Naive thymus-derived CD4-positive, alpha-beta T cell (primary cell): ENCODE measurements at regions of chr19 and their contacts with region 1.

Region 1: GRCh38 chr19:40716655-40717324 is at the starts of genes COQ8B and ITPKC:
- DNase-seq: peak; percentile 96 to 100 (median 99)
- ATAC-seq: peak; percentile 88
- H3K4me3 ChIP-seq: peak within 1 kb of the TSS; percentile 75
- H3K4me3 Mint-ChIP-seq: peak within 1 kb of the TSS; percentile 87 to 99 (median 94)
- H3K27ac ChIP-seq: peak within 1 kb of the TSS; percentile 92
- H3K27ac Mint-ChIP-seq: peak within 1 kb of the TSS; percentile 94 to 99 (median 97)
- H3K4me1 ChIP-seq: peaks cover 39 to 44% of the 10 kb centered on the region in 2 donors
- H3K4me1 Mint-ChIP-seq: peaks cover 42 to 74% (median 67%) of the 10 kb centered on the region in 7 donors
- H3K27me3 ChIP-seq: no peaks in the 10 kb centered on the region
- H3K27me3 Mint-ChIP-seq: no peaks in the 10 kb centered on the region
- total RNA-seq, gene COQ8B: 26.2 to 48.3 (median 43.8) TPM
- total RNA-seq, gene ITPKC: 4.9 to 9.0 (median 7.3) TPM

Region 2: GRCh38 chr19:39970675-39971379 is 746.0 kb before region 1 on chr19 and contains the start of gene PSMC4:
- CTCF ChIA-PET with region 1: no interaction called
- POLR2A ChIA-PET with region 1: no interaction called
- intact Hi-C with region 1: loop called in 1 of 2 experiments (anchors 10 kb)
- DNase-seq: peak; percentile 94 to 99 (median 98)
- ATAC-seq: peak; percentile 98
- H3K4me3 ChIP-seq: peak within 1 kb of the TSS; percentile 88
- H3K4me3 Mint-ChIP-seq: peak within 1 kb of the TSS; percentile 92 to 100 (median 94)
- H3K27ac ChIP-seq: peak within 1 kb of the TSS; percentile 95
- H3K27ac Mint-ChIP-seq: peak within 1 kb of the TSS; percentile 95 to 99 (median 97)
- H3K4me1 ChIP-seq: peaks cover 27 to 32% of the 10 kb centered on the region in 2 donors
- H3K4me1 Mint-ChIP-seq: peaks cover 39 to 61% (median 53%) of the 10 kb centered on the region in 7 donors
- H3K27me3 ChIP-seq: no peaks in the 10 kb centered on the region
- H3K27me3 Mint-ChIP-seq: no peaks in the 10 kb centered on the region
- total RNA-seq, gene PSMC4: 48.7 to 146 (median 69.1) TPM

Region 3: DNA sequence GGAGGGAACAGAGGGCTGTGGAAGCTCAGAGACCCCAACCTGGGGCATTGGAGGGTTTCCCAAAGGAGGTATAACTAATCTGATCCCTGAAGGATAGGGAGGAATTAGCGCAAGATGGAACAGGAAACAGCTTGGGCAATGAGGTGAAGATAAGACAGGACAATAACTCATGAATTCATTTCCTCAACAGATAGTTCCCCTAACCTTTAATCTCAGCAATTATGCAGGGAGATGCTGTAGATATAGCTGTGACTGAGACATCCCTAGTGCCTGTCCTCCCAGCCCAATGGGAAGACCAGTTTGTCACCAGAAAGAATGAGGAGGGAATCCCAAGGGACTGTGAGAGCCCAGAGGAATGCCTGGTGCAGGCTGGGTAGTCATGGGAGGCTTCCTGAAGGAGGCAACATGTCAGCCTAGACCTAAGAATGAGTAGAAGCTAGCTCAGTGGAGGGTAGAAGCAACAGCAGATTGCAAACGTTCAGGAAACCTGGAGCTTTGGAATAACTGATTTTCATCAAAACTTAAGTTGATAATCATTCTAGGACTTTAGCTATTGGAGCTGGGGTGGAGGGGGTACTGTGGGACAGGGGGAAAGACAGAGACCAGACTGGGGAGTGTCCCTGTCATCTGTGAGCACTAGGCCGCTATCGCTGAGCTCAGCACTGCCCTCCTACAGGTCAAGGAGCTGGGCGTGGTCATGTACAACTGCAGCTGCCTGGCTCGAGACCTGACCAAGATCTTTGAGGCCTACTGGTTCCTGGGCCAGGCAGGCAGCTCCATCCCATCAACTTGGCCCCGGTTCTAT is 345.6 kb before region 1 on chr19:
- CTCF ChIA-PET with region 1: no interaction called
- POLR2A ChIA-PET with region 1: no interaction called
- intact Hi-C with region 1: no loop called
- DNase-seq: no peak
- ATAC-seq: no peak
- H3K4me3 ChIP-seq: no peak overlapping the region
- H3K4me3 Mint-ChIP-seq: no peak overlapping the region
- H3K27ac ChIP-seq: no peak overlapping the region
- H3K27ac Mint-ChIP-seq: peak overlapping the region in 1 of 9 donors; percentile 14
- H3K4me1 ChIP-seq: no peaks in the 10 kb centered on the region
- H3K4me1 Mint-ChIP-seq: peaks cover 0 to 10% (median 8%) of the 10 kb centered on the region in 7 donors
- H3K27me3 ChIP-seq: no peaks in the 10 kb centered on the region
- H3K27me3 Mint-ChIP-seq: no peaks in the 10 kb centered on the region

Region 4: GRCh38 chr19:40570313-40571004 is 146.3 kb before region 1 on chr19:
- CTCF ChIA-PET with region 1: no interaction called
- POLR2A ChIA-PET with region 1: interaction called, 4 read pairs
- intact Hi-C with region 1: loop called in 1 of 2 experiments (anchors 10 kb)
- DNase-seq: peak; percentile 90 to 97 (median 96)
- ATAC-seq: peak; percentile 94
- H3K4me3 ChIP-seq: peak overlapping the region; percentile 45
- H3K4me3 Mint-ChIP-seq: peak overlapping the region; percentile 50 to 85 (median 82)
- H3K27ac ChIP-seq: no peak overlapping the region
- H3K27ac Mint-ChIP-seq: peak overlapping the region; percentile 55 to 93 (median 81)
- H3K4me1 ChIP-seq: peaks cover 9 to 13% of the 10 kb centered on the region in 2 donors
- H3K4me1 Mint-ChIP-seq: peaks cover 10 to 27% (median 19%) of the 10 kb centered on the region in 7 donors
- H3K27me3 ChIP-seq: no peaks in the 10 kb centered on the region
- H3K27me3 Mint-ChIP-seq: peaks cover 9 to 41% (median 17%) of the 10 kb centered on the region in 5 donors

Region 5: DNA sequence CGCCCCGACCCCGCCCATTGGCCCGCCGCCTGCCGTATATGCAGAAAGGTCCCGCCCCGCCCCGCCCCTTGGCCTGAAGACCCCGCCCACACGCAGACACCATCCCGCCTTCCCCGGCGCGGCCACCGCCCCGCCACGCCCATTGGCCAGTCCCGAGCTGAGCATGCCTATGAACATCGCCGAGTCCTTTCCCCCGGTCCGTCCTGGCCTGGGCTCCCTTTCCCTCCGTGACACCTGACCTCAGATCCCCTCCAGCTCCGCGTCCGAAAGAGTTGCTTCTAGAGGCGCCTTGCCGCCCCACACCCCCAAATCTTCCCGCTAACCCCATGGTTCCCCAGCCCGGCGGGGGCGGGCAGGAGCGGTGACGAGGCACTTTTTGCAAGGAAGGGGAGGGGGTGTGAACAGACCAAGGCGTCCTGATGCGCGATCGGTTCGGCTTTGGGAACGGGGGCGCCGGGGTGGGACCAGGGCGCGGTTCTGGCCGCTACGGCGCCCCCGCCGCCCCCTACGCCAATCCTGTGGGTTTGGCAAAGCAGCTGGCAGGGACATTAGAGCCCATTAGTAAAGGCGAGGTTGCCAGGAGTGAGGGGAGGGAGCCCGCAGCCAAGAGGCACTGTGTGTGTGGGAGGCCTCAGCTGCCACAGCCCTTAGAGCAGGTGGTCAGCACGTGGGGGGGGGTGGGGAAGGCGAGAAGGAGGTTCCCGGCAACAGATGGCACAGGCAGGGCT is 25.9 kb before region 1 on chr19:
- CTCF ChIA-PET with region 1: no interaction called
- POLR2A ChIA-PET with region 1: interaction called, 5 read pairs
- intact Hi-C with region 1: loop called (anchors 1 kb)
- DNase-seq: peak; percentile 60 to 90 (median 75)
- ATAC-seq: peak; percentile 92
- H3K4me3 ChIP-seq: peak overlapping the region; percentile 68
- H3K4me3 Mint-ChIP-seq: peak overlapping the region in 9 of 10 donors; percentile 78 to 96 (median 91)
- H3K27ac ChIP-seq: peak overlapping the region; percentile 55
- H3K27ac Mint-ChIP-seq: peak overlapping the region in 8 of 9 donors; percentile 58 to 94 (median 74)
- H3K4me1 ChIP-seq: peaks cover 0 to 6% of the 10 kb centered on the region in 2 donors
- H3K4me1 Mint-ChIP-seq: peaks cover 0 to 6% (median 4%) of the 10 kb centered on the region in 7 donors
- H3K27me3 ChIP-seq: no peaks in the 10 kb centered on the region
- H3K27me3 Mint-ChIP-seq: no peaks in the 10 kb centered on the region

Region 6: GRCh38 chr19:40806488-40807468 is 90.0 kb after region 1 on chr19:
- CTCF ChIA-PET with region 1: no interaction called
- POLR2A ChIA-PET with region 1: interaction called, 9 read pairs
- intact Hi-C with region 1: loop called in 1 of 2 experiments (anchors 1 kb)
- DNase-seq: peak; percentile 65 to 88 (median 81)
- ATAC-seq: peak; percentile 71
- H3K4me3 ChIP-seq: peak overlapping the region; percentile 53
- H3K4me3 Mint-ChIP-seq: peak overlapping the region; percentile 81 to 100 (median 90)
- H3K27ac ChIP-seq: peak overlapping the region; percentile 87
- H3K27ac Mint-ChIP-seq: peak overlapping the region; percentile 95 to 99 (median 98)
- H3K4me1 ChIP-seq: peaks cover 66 to 80% of the 10 kb centered on the region in 2 donors
- H3K4me1 Mint-ChIP-seq: peaks cover 67 to 98% (median 85%) of the 10 kb centered on the region in 7 donors
- H3K27me3 ChIP-seq: no peaks in the 10 kb centered on the region
- H3K27me3 Mint-ChIP-seq: peaks cover 0 to 6% (median 0%) of the 10 kb centered on the region in 5 donors

Region 7: DNA sequence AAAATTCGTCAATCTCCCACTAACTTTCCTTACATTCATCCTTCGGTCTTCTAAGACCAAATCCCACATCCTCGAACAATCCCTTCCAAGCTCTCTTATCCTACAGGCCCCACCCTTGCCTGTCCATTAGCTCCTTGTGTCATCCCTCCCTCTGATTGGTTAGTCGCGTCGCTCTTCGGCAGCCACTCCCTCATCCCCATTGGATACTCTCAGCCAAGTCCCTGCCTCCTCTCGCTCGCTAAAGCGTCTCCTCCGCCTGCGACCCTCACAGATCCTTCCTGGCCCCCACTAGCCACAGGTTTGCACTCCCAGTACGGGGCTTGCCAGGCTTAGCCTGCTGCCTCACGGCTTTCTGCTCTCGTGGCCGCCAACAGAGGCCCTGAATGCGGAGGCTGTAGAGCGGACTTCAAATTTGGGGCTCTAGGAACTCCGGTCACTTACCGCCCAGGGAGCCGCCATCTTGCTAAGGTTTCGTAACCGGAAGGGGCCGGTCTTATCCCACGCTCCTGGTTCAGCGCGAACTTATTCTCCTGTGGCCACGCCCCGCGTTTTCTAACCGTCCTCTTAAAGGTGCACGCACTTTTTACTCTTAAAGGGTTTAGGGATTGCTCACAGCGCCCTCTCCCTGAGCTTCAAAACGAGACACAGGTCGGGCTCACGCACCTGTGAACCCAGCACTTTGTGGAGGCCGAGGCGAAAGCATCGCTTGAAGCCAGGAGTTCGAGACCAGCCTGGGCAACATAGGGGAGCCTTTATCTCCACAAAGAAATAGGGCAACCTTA is 722.8 kb after region 1 on chr19 and contains the start of gene DMAC2:
- CTCF ChIA-PET with region 1: no interaction called
- POLR2A ChIA-PET with region 1: no interaction called
- intact Hi-C with region 1: loop called in 1 of 2 experiments (anchors 2 kb)
- DNase-seq: peak; percentile 65 to 94 (median 88)
- ATAC-seq: peak; percentile 100
- H3K4me3 ChIP-seq: peak within 1 kb of the TSS; percentile 96
- H3K4me3 Mint-ChIP-seq: peak within 1 kb of the TSS in 2 of 10 donors; percentile 49 to 54
- H3K27ac ChIP-seq: peak within 1 kb of the TSS; percentile 85
- H3K27ac Mint-ChIP-seq: peak within 1 kb of the TSS in 5 of 9 donors; percentile 3 to 89 (median 56)
- H3K4me1 ChIP-seq: peaks cover 7 to 12% of the 10 kb centered on the region in 2 donors
- H3K4me1 Mint-ChIP-seq: peaks cover 4 to 25% (median 6%) of the 10 kb centered on the region in 7 donors
- H3K27me3 ChIP-seq: no peaks in the 10 kb centered on the region
- H3K27me3 Mint-ChIP-seq: peaks cover 0 to 2% (median 0%) of the 10 kb centered on the region in 5 donors
- total RNA-seq, gene DMAC2: 22.2 to 44.4 (median 26.2) TPM